PC-9 (cell line): ENCODE measurements at regions of chr2 and their contacts with region 1.

Region 1: DNA sequence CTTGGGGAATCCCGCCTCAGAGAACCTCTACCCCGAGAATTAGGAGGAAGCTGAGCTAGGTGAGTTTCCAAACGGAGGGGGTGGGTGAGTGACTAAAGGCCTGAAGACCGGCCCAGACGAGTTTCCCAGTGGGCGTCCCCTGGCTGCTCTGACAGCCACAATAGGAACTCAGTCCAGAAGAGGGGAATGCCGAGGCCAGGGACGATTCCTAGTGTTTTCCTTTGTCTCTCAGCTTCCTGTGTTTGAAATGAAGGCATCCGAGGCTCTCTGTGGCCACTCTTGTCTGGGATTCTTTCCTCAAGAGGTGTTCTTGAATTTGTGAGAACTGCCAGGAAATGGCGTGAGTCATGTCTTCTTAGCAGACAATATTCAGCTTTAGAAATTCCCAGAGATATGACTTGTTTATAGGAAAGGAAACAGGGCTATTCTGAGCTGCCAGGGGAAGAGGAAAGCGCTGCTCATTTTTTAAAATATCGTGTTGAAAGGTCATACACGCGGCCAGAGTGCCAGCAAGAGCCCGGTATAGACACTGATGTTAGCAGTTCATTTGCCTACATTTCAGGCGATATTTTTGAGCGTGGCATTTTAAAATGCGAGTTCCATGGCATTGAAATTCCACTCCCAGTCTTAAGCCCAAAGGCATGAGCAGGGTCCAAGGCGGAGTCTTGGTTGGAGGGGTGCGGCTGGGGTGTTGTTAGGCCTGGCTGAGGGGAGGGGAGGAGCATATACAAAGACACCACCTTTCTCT is 169.1 kb upstream of the KLF7 start:
- DNase-seq: peak; percentile 57 to 82
- H3K4me3 ChIP-seq: peak overlapping the region; percentile 48
- H3K27ac ChIP-seq: peak overlapping the region; percentile 91
- H3K4me1 ChIP-seq: peaks cover 38% of the 10 kb centered on the region
- H3K27me3 ChIP-seq: no peaks in the 10 kb centered on the region
- CTCF ChIP-seq: no peak

Region 2: DNA sequence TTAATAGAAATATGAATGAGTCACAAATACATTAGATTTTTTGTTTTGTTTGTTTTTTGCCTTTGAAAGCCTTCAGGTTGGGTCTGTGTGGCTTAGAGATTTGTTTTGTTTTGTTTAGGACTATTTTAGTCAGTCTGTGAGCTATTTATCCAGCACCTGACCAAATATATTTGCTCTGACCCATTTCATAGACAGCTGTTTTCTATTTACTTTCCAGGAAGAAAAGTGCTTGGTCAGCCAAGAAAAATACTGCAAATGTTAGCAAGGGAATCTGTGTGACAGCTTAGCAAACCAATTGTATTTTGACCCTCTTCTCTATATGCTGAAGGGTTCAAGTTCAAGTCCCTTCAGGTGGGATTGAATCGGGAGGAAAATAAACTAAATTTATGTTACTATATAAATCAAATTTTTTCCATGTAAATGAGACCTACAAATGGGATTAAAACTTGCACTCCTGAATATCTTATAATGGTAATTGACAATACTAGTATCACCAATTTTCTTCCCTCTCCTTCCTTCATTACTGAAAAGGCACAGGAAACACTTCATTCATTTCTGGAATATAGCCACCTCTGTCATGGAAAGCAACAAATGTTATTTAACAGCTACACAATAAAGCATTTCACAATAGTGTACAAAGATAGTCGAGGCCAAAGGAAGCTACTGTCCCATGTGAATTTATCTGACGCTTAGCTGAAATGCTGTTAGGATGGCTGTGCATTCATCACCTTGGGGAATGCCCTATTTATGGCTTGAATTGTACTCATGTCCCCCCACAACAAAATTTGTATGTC is 146.0 kb before region 1 on chr2:
- CTCF ChIA-PET with region 1: no interaction called
- POLR2A ChIA-PET with region 1: interaction called, 12 read pairs
- intact Hi-C with region 1: no loop called
- DNase-seq: peak in 1 of 2 experiments; percentile 68
- H3K4me3 ChIP-seq: no peak overlapping the region
- H3K27ac ChIP-seq: no peak overlapping the region
- H3K4me1 ChIP-seq: peaks cover 11% of the 10 kb centered on the region
- H3K27me3 ChIP-seq: no peaks in the 10 kb centered on the region
- CTCF ChIP-seq: no peak

Region 3: DNA sequence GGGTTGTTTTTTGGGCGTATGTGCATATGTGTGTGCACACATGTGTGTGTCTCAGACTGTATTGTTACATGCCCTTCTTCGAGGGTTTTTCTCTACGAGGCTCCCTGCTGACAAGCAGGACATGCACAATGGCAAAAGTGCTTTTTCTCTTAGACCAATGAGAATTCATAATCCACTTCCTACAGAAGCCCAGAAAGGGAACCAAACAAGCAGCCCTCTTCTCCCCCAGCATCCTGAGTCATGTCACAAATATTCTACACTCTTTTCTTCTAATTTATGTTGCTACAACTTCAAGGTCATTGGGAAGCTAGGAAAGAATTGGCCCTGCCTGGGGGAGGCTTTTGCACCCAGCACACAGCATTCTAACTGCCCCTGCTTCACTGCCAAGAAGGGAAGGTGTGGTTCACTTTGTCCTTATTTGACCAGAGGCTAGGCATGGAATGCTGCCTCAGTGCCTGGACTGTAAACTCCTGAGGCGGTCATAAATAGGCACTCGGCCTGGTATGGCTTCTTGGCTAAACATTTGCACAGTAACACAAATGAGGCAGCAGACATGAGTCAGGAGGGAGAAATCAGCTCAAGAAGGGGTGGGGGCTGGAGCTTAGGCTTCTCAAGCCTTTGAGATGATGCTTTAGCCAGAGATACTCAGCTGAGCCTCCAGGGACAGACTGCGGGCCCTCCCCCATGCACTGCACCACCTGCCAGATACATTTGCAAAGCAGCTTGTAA is 76.4 kb before region 1 on chr2:
- CTCF ChIA-PET with region 1: no interaction called
- POLR2A ChIA-PET with region 1: interaction called, 7 read pairs
- intact Hi-C with region 1: loop called (anchors 2 kb)
- DNase-seq: peak; percentile 75 to 81
- H3K4me3 ChIP-seq: no peak overlapping the region
- H3K27ac ChIP-seq: no peak overlapping the region
- H3K4me1 ChIP-seq: peaks cover 39% of the 10 kb centered on the region
- H3K27me3 ChIP-seq: no peaks in the 10 kb centered on the region
- CTCF ChIP-seq: no peak

Region 4: DNA sequence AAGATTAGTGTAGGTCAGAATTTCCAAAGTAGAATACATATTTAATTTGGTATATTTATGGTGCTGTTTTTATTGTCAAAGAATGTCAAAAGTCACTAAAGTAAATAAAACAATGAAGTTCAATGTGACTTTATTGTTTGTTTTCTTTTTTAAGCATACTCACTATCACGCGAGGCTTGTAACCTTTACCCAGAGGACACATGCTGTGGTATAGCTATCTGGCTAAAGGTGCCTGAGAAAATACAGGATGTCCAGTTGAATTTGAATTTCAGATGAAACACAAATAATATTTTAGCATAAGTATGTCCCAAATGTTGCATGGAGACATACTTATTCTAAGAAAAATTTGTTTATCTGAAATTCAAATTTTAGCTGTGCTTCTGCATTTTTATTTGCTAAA is 65.8 kb before region 1 on chr2:
- CTCF ChIA-PET with region 1: no interaction called
- POLR2A ChIA-PET with region 1: no interaction called
- intact Hi-C with region 1: no loop called
- DNase-seq: no peak
- H3K4me3 ChIP-seq: no peak overlapping the region
- H3K27ac ChIP-seq: no peak overlapping the region
- H3K4me1 ChIP-seq: no peaks in the 10 kb centered on the region
- H3K27me3 ChIP-seq: no peaks in the 10 kb centered on the region
- CTCF ChIP-seq: no peak

Region 5: GRCh38 chr2:207394812-207395534 is 60.2 kb after region 1 on chr2:
- CTCF ChIA-PET with region 1: no interaction called
- POLR2A ChIA-PET with region 1: no interaction called
- intact Hi-C with region 1: loop called (anchors 5 kb)
- DNase-seq: peak; percentile 79 to 96
- H3K4me3 ChIP-seq: peak overlapping the region; percentile 40; the same call in 1 of the 2 replicates
- H3K27ac ChIP-seq: peak overlapping the region; percentile 99
- H3K4me1 ChIP-seq: peaks cover 37% of the 10 kb centered on the region
- H3K27me3 ChIP-seq: no peaks in the 10 kb centered on the region
- CTCF ChIP-seq: no peak

Region 6: GRCh38 chr2:207473049-207473930 is 138.5 kb after region 1 on chr2:
- CTCF ChIA-PET with region 1: no interaction called
- POLR2A ChIA-PET with region 1: no interaction called
- intact Hi-C with region 1: loop called (anchors 5 kb)
- DNase-seq: peak; percentile 40 to 46
- H3K4me3 ChIP-seq: no peak overlapping the region
- H3K27ac ChIP-seq: no peak overlapping the region
- H3K4me1 ChIP-seq: peaks cover 18% of the 10 kb centered on the region
- H3K27me3 ChIP-seq: no peaks in the 10 kb centered on the region
- CTCF ChIP-seq: peak; percentile 64